MCF 10A (cell line): ENCODE measurements at regions of chr18 and their contacts with region 1.

Region 1: DNA sequence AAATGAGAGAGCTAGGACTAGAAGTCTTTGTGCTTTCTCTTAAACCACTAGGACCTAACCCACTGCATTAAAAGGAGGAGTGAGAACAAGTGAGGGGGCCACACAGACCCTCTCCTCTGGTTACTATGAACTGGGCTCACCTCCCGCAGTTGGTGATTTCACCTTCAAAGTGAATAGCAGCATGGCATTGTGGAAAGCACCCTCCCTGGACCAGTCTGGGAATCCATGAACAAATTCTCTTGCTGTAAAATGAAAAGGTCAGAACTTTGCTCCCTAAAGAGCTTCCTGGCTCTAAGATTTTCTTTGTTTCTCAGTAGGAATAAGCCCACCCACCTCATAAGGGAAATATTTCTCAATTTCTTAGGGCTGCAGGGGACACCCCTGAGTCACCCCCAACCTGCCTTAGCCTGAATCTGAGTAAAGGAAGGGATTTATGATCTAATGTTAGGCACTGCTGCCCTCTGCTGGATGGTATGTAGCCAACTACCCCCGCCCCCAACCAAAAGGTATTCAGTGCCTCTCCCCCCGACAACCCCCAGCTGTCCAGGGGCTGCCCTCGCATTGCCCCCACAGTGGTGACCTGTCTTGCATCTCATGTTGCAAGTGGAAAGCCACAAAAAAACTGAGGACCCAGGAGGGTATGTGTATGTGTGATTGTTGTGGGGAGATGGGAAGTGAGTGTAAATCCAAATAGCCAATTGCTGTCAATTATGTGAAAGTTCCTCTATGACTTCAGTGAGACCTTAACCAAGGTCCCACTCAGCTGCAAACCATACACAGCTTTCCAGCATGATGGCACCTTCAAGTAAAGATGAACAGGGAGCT is 230.9 kb upstream of the SLC14A2 start:
- DNase-seq: peak; percentile 72
- H3K4me3 Mint-ChIP-seq: no peak overlapping the region
- H3K27ac Mint-ChIP-seq: no peak overlapping the region
- H3K4me1 Mint-ChIP-seq: peaks cover 6% of the 10 kb centered on the region
- H3K27me3 Mint-ChIP-seq: no peaks in the 10 kb centered on the region
- CTCF ChIP-seq: peak; percentile 69

Region 2: DNA sequence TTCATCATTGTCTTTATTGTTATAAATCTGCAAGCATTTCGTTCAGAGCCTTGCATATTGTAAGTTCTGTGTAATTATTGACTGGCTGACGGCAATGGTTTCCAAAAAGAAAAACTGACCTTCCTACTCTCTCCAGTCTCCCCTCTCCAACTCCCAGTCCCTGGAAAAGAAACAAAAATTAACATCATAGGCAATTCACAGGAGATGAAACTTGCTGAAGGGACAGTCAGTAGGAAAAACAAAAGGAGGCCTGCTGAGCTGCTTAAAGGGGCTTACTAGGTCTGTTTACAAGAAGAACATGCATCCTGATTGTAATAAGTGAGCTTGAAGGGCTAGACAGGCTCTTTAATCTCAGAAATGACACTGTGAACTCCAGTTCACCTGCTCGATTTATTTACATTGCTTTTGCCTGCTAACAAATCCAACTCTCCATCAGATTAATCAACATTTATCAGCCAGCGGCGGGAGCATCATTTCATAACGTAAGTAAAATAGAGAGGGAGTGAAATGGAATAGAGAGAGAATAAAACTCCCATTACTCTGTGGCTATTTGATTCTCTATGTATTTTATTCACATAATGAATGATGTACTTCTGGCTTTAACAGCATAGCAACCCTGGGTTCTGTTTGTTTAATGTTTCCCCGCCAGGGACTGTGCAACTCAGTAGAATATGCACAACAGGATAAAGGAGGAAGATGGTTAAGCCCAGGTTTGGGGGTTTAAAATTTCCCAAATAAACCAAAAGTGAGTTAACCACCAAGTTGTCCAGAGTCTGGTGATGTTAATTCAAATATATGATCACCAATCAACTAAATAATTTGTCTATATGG is 960.3 kb before region 1 on chr18:
- CTCF ChIA-PET with region 1: no interaction called
- POLR2A ChIA-PET with region 1: no interaction called
- intact Hi-C with region 1: no loop called
- DNase-seq: no peak
- H3K4me3 Mint-ChIP-seq: no peak overlapping the region
- H3K27ac Mint-ChIP-seq: no peak overlapping the region
- H3K4me1 Mint-ChIP-seq: no peaks in the 10 kb centered on the region
- H3K27me3 Mint-ChIP-seq: no peaks in the 10 kb centered on the region
- CTCF ChIP-seq: no peak

Region 3: DNA sequence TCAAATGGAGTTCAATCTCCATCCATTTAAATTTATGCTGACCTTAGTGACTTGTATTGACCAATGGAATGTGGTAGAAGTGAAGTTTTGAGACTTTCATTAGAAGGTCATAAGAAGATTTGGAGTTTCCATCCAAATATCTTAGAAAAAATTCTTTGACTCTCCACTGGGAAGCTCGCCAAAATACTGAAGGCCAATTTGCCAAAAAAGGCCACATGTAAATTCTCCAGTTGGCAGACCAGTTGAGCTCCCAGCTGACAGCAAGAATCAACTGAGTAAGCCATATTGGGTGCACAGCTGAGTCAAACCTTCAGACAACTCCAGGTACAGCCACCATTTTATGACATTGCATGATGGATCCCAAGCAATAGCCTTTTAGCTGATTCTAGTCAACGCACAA is 932.0 kb before region 1 on chr18:
- CTCF ChIA-PET with region 1: no interaction called
- POLR2A ChIA-PET with region 1: no interaction called
- intact Hi-C with region 1: loop called (anchors 10 kb)
- DNase-seq: peak; percentile 4
- H3K4me3 Mint-ChIP-seq: no peak overlapping the region
- H3K27ac Mint-ChIP-seq: no peak overlapping the region
- H3K4me1 Mint-ChIP-seq: no peaks in the 10 kb centered on the region
- H3K27me3 Mint-ChIP-seq: no peaks in the 10 kb centered on the region
- CTCF ChIP-seq: no peak

Region 4: DNA sequence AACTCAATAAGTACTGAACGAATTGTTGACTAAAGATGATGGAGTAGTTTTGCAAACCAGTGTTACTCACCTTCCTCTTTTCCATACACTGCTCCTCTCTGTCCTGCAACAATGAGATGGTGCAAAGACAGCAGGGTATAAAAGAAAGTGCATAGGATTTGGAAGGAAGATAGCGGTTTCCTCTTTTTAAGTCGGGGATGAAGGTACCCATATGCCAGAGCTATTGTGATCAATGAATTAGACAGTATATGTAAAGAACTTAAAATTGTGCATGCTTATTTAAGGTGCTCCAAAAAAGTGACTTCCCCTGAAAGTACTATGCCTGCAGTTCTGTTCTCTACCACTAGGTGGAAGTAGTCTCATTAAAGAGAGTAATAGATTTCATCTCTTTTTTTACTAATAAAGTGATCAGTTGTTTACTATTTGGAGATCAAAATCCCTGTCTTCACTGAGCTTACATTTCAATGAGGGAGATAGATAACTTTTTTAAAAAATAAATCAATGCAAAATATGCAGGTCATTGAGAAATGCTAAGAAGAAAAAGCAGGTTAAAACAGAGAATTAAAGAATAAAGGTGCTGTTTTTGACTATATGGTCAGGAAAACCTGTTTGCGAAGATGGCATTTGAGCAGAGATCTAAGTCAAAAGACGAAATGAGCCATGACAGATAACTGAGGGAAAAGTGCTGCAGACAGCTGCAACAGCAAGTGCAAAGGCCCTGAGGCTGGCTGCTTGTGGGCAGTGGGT is 108.8 kb before region 1 on chr18:
- CTCF ChIA-PET with region 1: interaction called, 138 read pairs
- POLR2A ChIA-PET with region 1: no interaction called
- intact Hi-C with region 1: loop called (anchors 1 kb)
- DNase-seq: peak; percentile 57
- H3K4me3 Mint-ChIP-seq: no peak overlapping the region
- H3K27ac Mint-ChIP-seq: no peak overlapping the region
- H3K4me1 Mint-ChIP-seq: no peaks in the 10 kb centered on the region
- H3K27me3 Mint-ChIP-seq: peaks cover under 1% of the 10 kb centered on the region
- CTCF ChIP-seq: peak; percentile 73

Region 5: GRCh38 chr18:45365835-45366234 is 18.5 kb before region 1 on chr18:
- CTCF ChIA-PET with region 1: interaction called, 12 read pairs
- POLR2A ChIA-PET with region 1: no interaction called
- intact Hi-C with region 1: no loop called
- DNase-seq: no peak
- H3K4me3 Mint-ChIP-seq: no peak overlapping the region
- H3K27ac Mint-ChIP-seq: no peak overlapping the region
- H3K4me1 Mint-ChIP-seq: no peaks in the 10 kb centered on the region
- H3K27me3 Mint-ChIP-seq: no peaks in the 10 kb centered on the region
- CTCF ChIP-seq: no peak

Region 6: DNA sequence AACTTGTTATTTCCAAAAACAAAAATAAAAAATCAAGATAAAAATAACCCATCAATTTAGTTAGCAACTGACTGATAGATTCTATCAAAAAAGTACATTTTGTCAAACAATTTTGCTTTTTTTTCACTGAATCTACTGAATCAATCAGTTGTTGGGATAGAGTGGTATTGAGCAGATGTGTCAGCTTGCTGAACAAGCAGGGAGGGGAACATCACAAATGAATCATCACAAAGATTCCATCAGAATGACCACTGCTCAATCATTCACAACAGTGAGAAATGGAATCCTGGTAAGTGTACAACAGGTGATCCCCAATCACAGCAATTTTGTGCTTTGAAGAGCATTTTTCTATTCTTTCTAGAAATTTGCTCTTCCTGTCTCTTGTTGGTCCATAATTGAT is 218.6 kb after region 1 on chr18:
- CTCF ChIA-PET with region 1: no interaction called
- POLR2A ChIA-PET with region 1: no interaction called
- intact Hi-C with region 1: no loop called
- DNase-seq: no peak
- H3K4me3 Mint-ChIP-seq: no peak overlapping the region
- H3K27ac Mint-ChIP-seq: no peak overlapping the region
- H3K4me1 Mint-ChIP-seq: peaks cover 13% of the 10 kb centered on the region
- H3K27me3 Mint-ChIP-seq: peaks cover 2% of the 10 kb centered on the region
- CTCF ChIP-seq: no peak

Region 7: DNA sequence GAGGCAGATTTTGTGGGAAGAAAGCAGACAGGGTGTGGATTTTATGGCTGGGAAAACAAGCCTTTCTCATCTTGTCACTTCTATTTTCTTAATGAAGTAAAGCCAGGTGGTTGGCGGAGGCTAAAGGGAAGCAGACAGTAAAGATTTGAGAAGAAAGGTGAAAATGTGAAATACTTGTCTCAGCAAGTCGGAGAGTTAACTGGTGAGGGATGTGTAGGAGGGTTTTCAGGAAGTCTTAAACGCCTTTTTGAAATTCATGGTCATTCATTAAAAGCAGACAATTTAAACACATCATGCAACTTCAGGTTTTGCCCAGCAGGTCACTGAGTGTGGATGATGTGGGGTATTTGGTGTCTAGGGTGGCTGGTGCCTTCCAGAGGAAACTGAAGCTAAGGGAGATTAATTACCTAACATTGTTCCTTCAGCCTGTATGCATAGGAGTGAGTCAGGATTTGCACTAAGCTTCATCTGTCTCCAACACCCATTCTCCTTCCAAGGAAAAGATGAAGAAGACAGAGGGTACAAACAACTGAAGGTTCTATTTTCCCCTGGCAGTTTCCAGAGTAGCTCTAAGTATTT is 251.7 kb after region 1 on chr18:
- CTCF ChIA-PET with region 1: no interaction called
- POLR2A ChIA-PET with region 1: no interaction called
- intact Hi-C with region 1: no loop called
- DNase-seq: no peak
- H3K4me3 Mint-ChIP-seq: no peak overlapping the region
- H3K27ac Mint-ChIP-seq: no peak overlapping the region
- H3K4me1 Mint-ChIP-seq: no peaks in the 10 kb centered on the region
- H3K27me3 Mint-ChIP-seq: no peaks in the 10 kb centered on the region
- CTCF ChIP-seq: no peak